Mammary epithelial cell (primary cell): ENCODE measurements at regions of chr19 and their contacts with region 1.

Region 1: GRCh38 chr19:45423589-45424190 is at the start of gene ERCC1:
- DNase-seq: peak; percentile 99
- H3K4me3 ChIP-seq: peak within 1 kb of the TSS; percentile 50 to 95 (median 66)
- H3K27ac ChIP-seq: peak within 1 kb of the TSS; percentile 100
- H3K4me1 ChIP-seq: peaks cover 45% of the 10 kb centered on the region
- H3K27me3 ChIP-seq: no peaks in the 10 kb centered on the region
- CTCF ChIP-seq: no peak
- total RNA-seq, gene ERCC1: 81.9 to 316 TPM

Region 2: DNA sequence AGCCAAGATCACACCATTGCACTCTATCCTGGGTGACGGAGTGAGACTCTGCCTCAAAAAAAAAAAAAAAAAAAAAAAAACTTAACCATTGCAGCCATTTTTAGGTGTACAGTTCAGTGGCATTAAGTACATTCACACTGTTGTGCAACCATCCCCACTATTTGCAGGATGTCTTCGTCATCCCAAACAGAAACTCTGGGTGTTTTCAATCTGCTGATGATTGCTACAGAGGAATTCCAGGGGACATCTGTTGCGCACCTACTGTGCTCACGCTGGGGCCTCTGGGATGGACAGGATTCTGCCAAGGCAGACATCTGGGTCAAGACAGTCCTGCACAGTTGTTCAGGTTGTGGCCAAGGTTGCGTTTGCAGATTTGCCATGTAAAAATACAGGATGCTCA is 484.0 kb before region 1 on chr19:
- CTCF ChIA-PET with region 1: no interaction called
- dilution Hi-C with region 1: no loop called
- in situ Hi-C with region 1: no loop called
- intact Hi-C with region 1: no loop called
- DNase-seq: no peak
- H3K4me3 ChIP-seq: no peak overlapping the region
- H3K27ac ChIP-seq: no peak overlapping the region
- H3K4me1 ChIP-seq: peaks cover 8% of the 10 kb centered on the region
- H3K27me3 ChIP-seq: no peaks in the 10 kb centered on the region
- CTCF ChIP-seq: no peak

Region 3: DNA sequence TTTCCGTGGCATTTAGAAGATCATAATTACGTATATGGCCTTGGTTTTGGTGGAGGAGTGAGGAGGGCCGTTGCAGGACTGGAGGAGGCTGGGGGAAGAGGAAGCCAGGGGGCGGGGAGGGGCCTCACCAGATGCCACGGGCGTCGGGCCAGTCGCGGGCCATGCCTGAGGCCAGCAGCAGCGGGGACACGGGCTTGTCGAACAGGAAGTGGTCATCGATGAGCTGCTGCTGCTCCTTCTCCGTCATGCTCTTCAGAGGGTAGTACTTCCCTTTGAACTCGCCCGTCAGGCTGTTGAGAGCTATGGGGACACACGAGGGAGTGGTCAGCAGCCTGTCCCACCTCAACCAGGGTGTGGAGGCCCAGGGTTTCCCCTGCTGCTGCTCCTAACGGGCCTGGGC is 112.1 kb before region 1 on chr19:
- CTCF ChIA-PET with region 1: no interaction called
- dilution Hi-C with region 1: no loop called
- in situ Hi-C with region 1: no loop called
- intact Hi-C with region 1: no loop called
- DNase-seq: no peak
- H3K4me3 ChIP-seq: no peak overlapping the region
- H3K27ac ChIP-seq: no peak overlapping the region
- H3K4me1 ChIP-seq: peaks cover 2% of the 10 kb centered on the region
- H3K27me3 ChIP-seq: no peaks in the 10 kb centered on the region
- CTCF ChIP-seq: no peak

Region 4: GRCh38 chr19:45370410-45371204 is 53.1 kb before region 1 on chr19 and contains the start of gene ERCC2:
- CTCF ChIA-PET with region 1: no interaction called
- dilution Hi-C with region 1: no loop called
- in situ Hi-C with region 1: no loop called
- intact Hi-C with region 1: loop called (anchors 5 kb)
- DNase-seq: peak; percentile 99
- H3K4me3 ChIP-seq: peak within 1 kb of the TSS; percentile 82 to 86 (median 85)
- H3K27ac ChIP-seq: peak within 1 kb of the TSS; percentile 74
- H3K4me1 ChIP-seq: peaks cover 3% of the 10 kb centered on the region
- H3K27me3 ChIP-seq: no peaks in the 10 kb centered on the region
- CTCF ChIP-seq: no peak
- total RNA-seq, gene ERCC2: 17.7 to 26.3 TPM

Region 5: GRCh38 chr19:45446320-45446763 is 22.7 kb after region 1 on chr19:
- CTCF ChIA-PET with region 1: no interaction called
- dilution Hi-C with region 1: no loop called
- in situ Hi-C with region 1: no loop called
- intact Hi-C with region 1: loop called (anchors 2 kb)
- DNase-seq: peak; percentile 38
- H3K4me3 ChIP-seq: no peak overlapping the region
- H3K27ac ChIP-seq: peak overlapping the region; percentile 97
- H3K4me1 ChIP-seq: peaks cover 56% of the 10 kb centered on the region
- H3K27me3 ChIP-seq: no peaks in the 10 kb centered on the region
- CTCF ChIP-seq: peak; percentile 31 to 42